Heart left ventricle (tissue), 16 donors: ENCODE measurements at regions of chr20 and their contacts with region 1.

Region 1: DNA sequence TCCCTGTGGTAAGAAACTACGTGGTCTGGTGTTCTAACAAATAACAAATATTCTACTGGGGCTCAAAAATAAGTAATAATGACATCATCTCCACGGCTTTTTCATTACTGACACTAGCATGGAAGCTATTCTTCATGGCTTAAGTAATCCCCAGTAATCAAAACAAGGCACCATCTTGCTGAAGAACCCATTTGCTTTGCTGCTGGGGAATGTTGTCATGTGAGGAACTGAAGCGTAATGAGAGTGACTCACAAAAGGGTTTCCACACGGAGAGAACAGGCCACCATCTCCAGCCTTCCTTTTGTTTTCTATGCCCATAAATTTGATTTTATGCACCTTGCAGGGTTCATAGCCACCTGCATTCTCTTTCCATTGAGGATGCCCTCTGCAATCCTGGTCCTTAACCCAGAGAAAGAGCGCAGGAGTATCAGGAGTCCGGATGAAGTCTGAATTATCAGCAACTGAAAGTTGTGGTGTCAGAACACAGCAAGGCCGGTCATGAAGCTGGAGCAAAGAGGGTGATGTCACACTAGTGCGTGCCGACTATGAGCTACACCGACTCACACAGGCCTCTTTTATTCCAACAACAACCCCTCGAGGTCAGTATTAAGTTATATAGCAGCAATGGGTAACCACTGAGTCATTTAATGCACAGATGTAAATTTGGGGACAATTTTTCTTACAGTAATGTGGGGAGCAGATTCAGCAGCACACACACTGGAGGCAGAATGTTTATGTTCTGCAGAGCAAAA is 173.7 kb upstream of the SSTR4 start:
- DNase-seq: no peak
- ATAC-seq: no peak
- H3K4me3 ChIP-seq: no peak overlapping the region
- H3K27ac ChIP-seq: peak overlapping the region in 11 of 12 donors; percentile 24 to 87 (median 63)
- H3K4me1 ChIP-seq: peaks cover 0 to 20% (median 4%) of the 10 kb centered on the region in 12 donors
- H3K27me3 ChIP-seq: no peaks in the 10 kb centered on the region
- CTCF ChIP-seq: no peak
- POLR2A ChIP-seq: no peak

Region 2: GRCh38 chr20:22691369-22692118 is 169.9 kb before region 1 on chr20:
- intact Hi-C with region 1: loop called in 3 of 10 experiments (anchors 5 to 10 kb)
- DNase-seq: peak; percentile 79 to 87 (median 84)
- ATAC-seq: peak; percentile 85 to 95 (median 92)
- H3K4me3 ChIP-seq: peak overlapping the region in 6 of 12 donors; percentile 18 to 32 (median 26)
- H3K27ac ChIP-seq: peak overlapping the region in 7 of 12 donors; percentile 16 to 61 (median 31)
- H3K4me1 ChIP-seq: peaks cover 0 to 25% (median 8%) of the 10 kb centered on the region in 12 donors
- H3K27me3 ChIP-seq: no peaks in the 10 kb centered on the region
- CTCF ChIP-seq: peak; percentile 88 to 96 (median 92)
- POLR2A ChIP-seq: no peak

Region 3: GRCh38 chr20:22729180-22729579 is 132.2 kb before region 1 on chr20:
- intact Hi-C with region 1: loop called in 3 of 10 experiments (anchors 5 to 10 kb)
- DNase-seq: no peak
- ATAC-seq: peak in 1 of 4 donors; percentile 38
- H3K4me3 ChIP-seq: no peak overlapping the region
- H3K27ac ChIP-seq: no peak overlapping the region
- H3K4me1 ChIP-seq: peaks cover 0 to 6% (median 0%) of the 10 kb centered on the region in 12 donors
- H3K27me3 ChIP-seq: no peaks in the 10 kb centered on the region
- CTCF ChIP-seq: no peak
- POLR2A ChIP-seq: no peak

Region 4: DNA sequence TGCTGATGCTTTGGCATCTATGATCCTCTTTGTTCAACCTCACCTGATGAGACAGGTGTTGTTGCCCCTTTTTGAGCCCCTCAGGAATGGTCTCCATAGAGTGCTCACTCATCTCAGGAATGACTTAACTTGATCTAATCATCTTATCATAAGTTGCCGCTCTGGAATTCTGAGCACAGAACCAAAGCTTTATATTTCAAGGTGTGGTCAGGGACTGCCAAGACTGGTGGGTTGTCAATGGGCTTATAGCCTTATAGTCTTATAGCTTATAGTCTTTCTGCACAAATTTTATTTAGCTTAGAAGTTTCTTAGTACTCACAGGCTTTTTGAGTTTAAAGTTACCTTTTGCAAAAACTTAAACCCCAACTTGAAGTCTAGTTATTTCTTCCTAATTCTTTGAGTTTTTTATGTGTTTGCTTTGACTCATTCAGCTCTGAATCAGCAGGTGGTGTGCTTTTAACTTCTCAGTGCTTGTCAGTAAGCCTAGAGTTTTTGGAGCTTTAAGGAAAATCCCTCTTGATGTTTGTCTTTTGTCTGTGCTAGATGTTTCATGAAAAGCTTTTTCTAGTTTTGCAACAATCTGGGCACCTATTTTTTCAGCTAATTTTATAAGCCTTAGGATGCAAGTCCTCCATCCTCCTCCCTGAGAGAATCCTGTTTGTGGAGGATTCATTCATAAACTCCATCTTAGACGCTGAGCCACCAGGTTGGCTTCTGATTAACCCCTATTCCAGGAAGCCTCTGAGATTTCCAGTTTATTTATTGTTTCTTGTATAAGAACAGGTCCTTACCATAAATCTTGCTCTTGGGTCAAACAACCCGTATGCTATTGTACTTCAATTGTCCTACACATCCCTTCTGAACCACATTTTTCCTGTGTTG is 101.4 kb after region 1 on chr20:
- intact Hi-C with region 1: no loop called
- DNase-seq: no peak
- ATAC-seq: no peak
- H3K4me3 ChIP-seq: no peak overlapping the region
- H3K27ac ChIP-seq: no peak overlapping the region
- H3K4me1 ChIP-seq: no peaks in the 10 kb centered on the region
- H3K27me3 ChIP-seq: peaks cover 0 to 17% (median 0%) of the 10 kb centered on the region in 9 donors
- CTCF ChIP-seq: no peak
- POLR2A ChIP-seq: no peak

Region 5: DNA sequence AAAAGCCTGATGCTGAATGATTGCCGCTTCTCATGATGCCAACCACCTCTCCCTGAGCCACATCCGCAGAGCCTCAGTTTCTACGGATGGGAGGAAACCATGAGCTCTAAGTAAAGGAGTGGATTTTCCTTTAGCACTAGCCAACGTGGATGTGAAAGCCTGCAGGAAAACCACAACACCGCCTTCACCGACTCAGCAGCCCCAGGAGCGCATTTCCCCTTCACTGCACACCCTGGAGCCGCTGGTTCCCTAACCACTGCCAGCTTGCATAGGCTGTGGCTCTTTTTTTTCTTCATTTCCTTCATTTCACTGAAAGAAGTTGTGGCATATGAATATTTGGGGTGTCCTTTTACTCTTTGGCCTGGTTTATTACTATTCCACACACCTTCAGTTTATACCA is 123.2 kb after region 1 on chr20:
- intact Hi-C with region 1: loop called in 5 of 10 experiments (anchors 2 to 10 kb)
- DNase-seq: peak in 4 of 5 donors; percentile 33 to 66 (median 38)
- ATAC-seq: peak in 2 of 4 donors; percentile 39 to 77
- H3K4me3 ChIP-seq: no peak overlapping the region
- H3K27ac ChIP-seq: peak overlapping the region in 10 of 12 donors; percentile 32 to 70 (median 56)
- H3K4me1 ChIP-seq: peaks cover 0 to 22% (median 9%) of the 10 kb centered on the region in 12 donors
- H3K27me3 ChIP-seq: no peaks in the 10 kb centered on the region
- CTCF ChIP-seq: no peak
- POLR2A ChIP-seq: no peak

Region 6: DNA sequence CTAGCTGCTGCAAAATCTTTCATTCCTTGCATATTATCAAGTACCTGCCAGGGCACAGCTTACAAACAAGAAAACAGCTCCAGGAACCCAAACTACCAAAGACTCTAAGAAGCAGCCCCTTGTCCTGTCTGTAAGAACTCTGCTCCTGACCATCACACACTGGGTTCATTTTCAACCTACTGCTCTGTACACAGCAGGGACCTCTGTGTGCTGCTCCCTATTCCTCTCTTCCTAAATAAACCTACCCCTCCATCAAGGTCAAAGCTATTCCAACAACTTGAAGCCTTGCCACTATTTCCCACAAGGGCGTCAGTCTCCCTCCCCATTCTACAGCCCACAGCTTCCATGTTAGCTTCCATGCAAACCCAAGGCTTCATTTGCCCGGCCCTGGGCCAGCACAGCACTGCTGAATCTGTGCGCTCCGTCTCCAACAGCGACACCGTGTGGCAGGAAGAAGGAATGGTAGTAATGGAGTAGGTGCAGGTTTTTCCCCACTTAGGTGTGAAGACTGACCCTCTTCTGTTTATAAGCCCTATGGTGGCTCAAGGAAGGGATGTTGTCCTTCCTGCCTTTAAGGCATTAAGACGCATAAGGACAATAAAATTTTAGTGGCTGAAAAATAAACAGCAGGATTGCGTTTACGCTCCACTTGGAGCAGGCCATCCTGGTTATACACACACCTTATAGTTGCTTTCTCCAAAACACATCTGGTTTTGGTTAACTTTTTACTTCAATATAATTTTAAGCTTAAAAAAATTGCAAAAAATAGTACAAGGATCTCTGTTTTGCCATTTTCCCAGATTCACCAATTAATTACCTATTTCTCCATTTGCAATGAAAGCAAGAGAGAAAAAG is 374.0 kb after region 1 on chr20:
- intact Hi-C with region 1: loop called in 1 of 10 experiments (anchors 10 kb)
- DNase-seq: peak; percentile 76 to 85 (median 76)
- ATAC-seq: peak; percentile 87 to 95 (median 95)
- H3K4me3 ChIP-seq: no peak overlapping the region
- H3K27ac ChIP-seq: no peak overlapping the region
- H3K4me1 ChIP-seq: peaks cover 0 to 4% (median 0%) of the 10 kb centered on the region in 12 donors
- H3K27me3 ChIP-seq: no peaks in the 10 kb centered on the region
- CTCF ChIP-seq: peak; percentile 80 to 93 (median 86)
- POLR2A ChIP-seq: no peak

Region 7: DNA sequence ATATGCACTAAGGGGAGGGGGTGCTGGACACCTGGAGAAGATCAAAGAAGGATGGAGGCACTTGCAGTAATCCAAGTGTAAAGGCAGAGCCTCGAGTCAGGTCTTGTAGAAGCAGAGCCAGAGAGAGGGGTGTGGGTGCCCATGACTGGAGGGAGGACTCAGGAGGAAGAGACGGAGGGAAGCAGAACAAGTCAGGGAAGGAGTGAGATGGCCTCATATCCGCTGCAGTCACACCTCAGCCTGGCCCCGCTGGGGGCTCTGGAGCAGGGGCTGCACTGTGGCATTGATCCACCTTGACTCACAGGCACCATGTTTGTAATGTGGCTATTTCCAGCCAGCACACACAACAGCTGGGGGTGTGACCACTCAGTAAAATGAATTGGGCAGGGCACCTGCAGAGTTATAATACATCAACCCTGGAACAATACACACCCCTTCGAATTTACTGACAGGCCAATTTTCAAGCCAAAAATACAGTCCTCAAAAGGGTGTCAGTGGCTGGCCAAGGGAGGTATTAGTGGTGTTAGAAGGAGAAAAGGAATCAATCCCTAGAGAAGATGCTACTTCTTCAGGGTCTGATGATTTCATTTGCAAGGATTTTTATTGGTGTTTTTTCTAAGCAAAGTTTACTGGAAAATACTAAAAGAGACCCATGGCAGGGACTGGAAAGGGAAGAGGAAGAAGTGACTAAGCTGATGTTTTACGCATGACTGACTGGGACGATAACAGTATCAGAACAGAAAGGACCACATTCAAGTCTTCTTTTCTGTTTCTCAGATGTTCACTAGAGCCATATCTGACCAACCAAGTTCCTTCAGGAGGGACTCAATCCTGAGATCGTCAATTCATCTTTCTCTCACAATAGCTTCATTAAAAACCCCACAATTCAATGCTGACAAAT is 470.3 kb after region 1 on chr20:
- intact Hi-C with region 1: loop called in 1 of 10 experiments (anchors 10 kb)
- DNase-seq: no peak
- ATAC-seq: peak in 1 of 4 donors; percentile 52
- H3K4me3 ChIP-seq: no peak overlapping the region
- H3K27ac ChIP-seq: no peak overlapping the region
- H3K4me1 ChIP-seq: peaks cover 0 to 14% (median 0%) of the 10 kb centered on the region in 12 donors
- H3K27me3 ChIP-seq: no peaks in the 10 kb centered on the region
- CTCF ChIP-seq: no peak
- POLR2A ChIP-seq: no peak